ENCODE measurements at regions of chr14 and their contacts with region 1.

Region 1: DNA sequence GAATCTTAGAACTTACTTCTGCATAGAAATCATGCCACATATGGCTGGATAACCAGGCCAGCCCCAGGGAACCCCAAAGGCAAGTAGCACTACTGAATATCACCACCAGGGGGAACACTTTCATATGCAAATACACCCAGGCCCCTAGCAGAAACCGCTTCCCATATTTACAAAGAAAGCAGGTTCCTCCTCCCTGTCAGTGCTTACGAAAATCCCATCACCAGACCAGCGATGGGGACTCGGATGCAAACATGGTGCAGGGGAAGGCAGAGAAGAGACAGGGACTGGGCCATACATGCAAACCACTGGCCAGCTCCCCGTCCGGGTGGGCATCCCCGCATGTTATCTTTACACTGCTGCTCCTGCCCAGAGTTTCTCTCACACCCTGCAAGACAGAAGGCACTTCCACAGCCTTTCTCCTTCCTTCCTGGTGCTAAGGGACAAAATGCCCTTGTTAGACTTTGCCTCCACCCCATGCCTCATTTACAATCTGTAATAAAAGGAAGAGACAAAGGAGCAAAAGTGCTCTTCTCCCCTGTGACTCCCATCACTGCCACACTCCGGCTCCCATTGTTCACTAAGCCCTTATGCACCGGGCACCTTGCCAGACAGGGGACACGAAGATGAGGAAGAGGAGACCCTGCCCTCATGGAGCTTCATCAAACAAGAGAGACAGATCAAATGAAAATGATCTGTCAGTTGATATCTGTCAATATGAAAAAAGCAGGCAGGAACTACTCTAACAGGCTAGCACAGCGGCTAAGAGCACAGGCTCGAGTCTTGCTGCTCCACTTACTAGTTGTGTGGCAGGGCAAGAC is 62.3 kb downstream of the PTPN21 start:
- DNase-seq: peak; percentile 58
- H3K4me3 ChIP-seq: no peak overlapping the region
- H3K27ac ChIP-seq: no peak overlapping the region
- H3K27me3 ChIP-seq: no peaks in the 10 kb centered on the region
- CTCF ChIP-seq: peak; percentile 90

Region 2: DNA sequence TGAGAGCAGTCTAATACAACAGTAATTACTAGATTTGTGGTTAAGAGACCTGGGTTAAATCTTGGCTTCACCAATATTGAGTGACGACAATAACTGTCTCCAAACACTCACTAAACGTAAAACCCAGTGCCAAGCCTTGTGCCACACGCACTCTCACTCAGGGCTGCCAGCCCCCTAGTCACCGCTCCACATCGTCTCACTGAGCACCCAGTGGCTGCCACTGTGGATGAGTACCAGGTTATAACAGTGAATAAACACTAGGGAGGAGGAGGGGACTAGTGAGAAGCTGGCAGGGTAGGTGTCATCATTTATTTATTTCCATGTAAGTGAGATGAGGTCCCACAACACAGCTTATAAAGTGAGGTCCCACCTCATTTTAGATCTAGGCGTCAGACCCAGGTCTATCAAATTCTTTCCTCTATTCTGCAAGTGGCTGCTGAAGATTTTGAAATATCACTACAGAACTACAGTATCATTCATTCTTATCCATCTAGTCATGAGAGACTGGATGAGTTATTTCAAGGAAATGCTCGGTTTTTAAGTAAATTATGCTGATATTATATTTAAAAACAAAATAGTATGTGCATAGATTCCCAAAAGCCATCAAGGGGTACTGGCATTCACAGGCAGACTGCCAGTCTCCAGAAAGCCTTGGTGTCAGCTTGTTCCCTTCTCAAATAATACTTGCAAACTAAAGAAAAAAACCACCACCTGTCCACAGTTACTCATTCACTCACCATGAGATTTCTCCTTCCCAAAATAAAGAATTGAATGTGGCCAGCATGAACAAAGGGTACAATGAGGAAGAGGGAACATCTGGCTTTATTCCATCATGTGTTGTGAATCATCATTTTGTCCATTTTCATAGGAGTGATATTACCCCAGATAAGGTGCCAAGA is 21.7 kb before region 1 on chr14:
- CTCF ChIA-PET with region 1: interaction called, 10 read pairs
- POLR2A ChIA-PET with region 1: interaction called, 10 read pairs
- DNase-seq: no peak
- H3K4me3 ChIP-seq: no peak overlapping the region
- H3K27ac ChIP-seq: no peak overlapping the region
- H3K27me3 ChIP-seq: no peaks in the 10 kb centered on the region
- CTCF ChIP-seq: no peak

Region 3: DNA sequence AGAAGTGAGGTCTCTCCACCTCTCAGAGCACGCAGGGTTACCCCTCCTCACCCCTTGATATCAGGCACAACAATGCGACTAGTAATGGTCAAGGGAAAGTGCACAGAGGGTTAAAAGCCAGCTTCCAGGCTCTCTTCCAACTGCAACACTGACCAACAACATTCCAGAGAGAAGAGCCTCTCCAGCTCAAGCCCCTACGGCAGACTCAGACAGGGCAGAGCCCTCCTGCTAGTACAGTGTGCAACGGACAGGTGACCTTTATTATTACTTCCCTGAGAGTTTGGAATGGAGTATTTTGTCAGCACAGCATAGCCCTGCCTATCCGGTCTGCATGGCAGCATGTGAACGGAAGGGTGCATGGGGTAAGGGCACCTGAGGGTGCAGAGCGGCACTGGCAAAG is 10.7 kb before region 1 on chr14:
- CTCF ChIA-PET with region 1: interaction called, 17 read pairs
- POLR2A ChIA-PET with region 1: no interaction called
- DNase-seq: no peak
- H3K4me3 ChIP-seq: no peak overlapping the region
- H3K27ac ChIP-seq: no peak overlapping the region
- H3K27me3 ChIP-seq: no peaks in the 10 kb centered on the region
- CTCF ChIP-seq: no peak

Region 4: DNA sequence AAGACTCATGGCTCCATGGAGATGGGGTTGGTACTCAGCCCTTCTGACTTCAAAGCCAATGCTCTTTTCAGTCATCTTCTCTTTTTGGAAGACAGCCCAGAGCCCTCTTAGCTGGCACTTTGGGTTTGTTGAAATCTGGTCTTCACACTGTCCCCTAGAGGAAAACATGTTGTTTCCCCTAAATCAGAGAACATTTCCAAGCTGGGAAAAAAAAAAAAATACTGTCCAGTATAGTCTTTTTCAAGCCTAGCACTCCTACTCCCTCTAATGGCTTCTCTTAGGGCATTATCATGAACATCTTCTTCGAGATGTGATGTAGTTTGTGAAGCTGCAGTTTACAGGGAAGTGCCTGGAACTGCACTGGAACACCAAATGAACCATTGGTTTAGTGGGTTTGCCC is 67.4 kb after region 1 on chr14:
- CTCF ChIA-PET with region 1: interaction called, 42 read pairs
- POLR2A ChIA-PET with region 1: no interaction called
- DNase-seq: peak; percentile 38
- H3K4me3 ChIP-seq: no peak overlapping the region
- H3K27ac ChIP-seq: no peak overlapping the region
- H3K27me3 ChIP-seq: no peaks in the 10 kb centered on the region
- CTCF ChIP-seq: peak; percentile 70

Region 5: GRCh38 chr14:88584451-88584850 is 92.0 kb after region 1 on chr14:
- CTCF ChIA-PET with region 1: no interaction called
- POLR2A ChIA-PET with region 1: no interaction called
- DNase-seq: no peak
- H3K4me3 ChIP-seq: no peak overlapping the region
- H3K27ac ChIP-seq: no peak overlapping the region
- H3K27me3 ChIP-seq: no peaks in the 10 kb centered on the region
- CTCF ChIP-seq: no peak

Measured in AG04450 (cell line).